Activated CD4-positive, alpha-beta T cell treated with anti-CD3 and anti-CD28 coated beads, Interleukin-2, amount 10 ng/mL, durations not matched to agents 24 days and 14 days (primary cell): ENCODE measurements at regions of chr1 and their contacts with region 1.

Region 1: DNA sequence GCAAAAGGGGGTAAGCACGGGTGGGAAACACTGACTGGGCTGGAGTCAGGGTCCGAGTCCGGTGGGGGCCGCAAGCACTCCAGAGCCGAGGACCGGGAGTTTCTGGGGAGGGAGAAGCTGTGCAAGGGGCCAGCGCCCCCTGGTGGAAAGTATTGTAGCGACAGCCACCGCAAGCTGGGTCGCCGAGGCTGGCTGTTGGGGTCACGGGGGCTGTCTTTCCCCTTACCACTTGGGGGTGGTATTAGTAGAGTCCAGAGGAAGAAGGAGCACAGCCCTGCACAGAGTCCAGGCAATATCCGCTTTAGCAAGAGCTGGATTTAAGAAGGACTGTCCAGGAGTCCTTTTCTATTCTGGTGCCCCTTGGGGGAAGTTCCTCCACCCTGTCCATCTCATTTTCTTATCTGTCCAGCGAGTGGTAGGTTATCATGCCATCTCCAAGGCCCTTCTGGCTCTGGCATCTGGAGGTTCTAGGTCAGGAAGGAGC is 17.9 kb upstream of the ETV3 start:
- DNase-seq: peak; percentile 93
- H3K4me3 Mint-ChIP-seq: peak overlapping the region; percentile 53
- H3K27ac Mint-ChIP-seq: peak overlapping the region; percentile 55
- H3K4me1 Mint-ChIP-seq: peaks cover 22% of the 10 kb centered on the region
- H3K27me3 Mint-ChIP-seq: peaks cover 31% of the 10 kb centered on the region

Region 2: DNA sequence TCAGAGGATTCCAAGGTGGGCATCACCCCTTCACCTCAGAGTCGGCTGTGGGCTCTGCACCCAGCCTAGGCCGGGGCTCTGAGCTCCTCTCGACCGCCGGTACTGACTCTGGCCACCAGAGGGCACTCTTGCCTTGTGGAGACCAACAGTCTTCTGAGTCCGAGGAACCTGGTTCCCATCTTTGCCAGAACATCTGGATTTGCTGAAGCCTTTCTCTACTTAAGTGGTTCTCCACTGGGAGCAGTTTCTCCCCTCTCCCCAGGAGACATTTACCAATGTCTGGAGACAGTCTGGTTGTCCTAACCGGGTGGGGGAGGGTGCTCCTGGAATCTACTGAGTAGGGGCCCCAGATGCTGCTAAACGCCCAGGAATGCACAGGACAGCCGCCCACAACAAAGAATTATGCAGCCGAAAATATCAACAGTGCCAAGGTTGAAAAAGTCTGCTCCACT is 65.9 kb before region 1 on chr1:
- intact Hi-C with region 1: loop called (anchors 1 kb)
- DNase-seq: peak; percentile 96
- H3K4me3 Mint-ChIP-seq: no peak overlapping the region
- H3K27ac Mint-ChIP-seq: no peak overlapping the region
- H3K4me1 Mint-ChIP-seq: peaks cover 2% of the 10 kb centered on the region
- H3K27me3 Mint-ChIP-seq: peaks cover 2% of the 10 kb centered on the region

Region 3: GRCh38 chr1:157138220-157139051 is 17.7 kb before region 1 on chr1 and contains the start of gene ETV3:
- intact Hi-C with region 1: loop called (anchors 2 kb)
- DNase-seq: peak; percentile 97
- H3K4me3 Mint-ChIP-seq: peak within 1 kb of the TSS; percentile 99
- H3K27ac Mint-ChIP-seq: peak within 1 kb of the TSS; percentile 90
- H3K4me1 Mint-ChIP-seq: peaks cover 62% of the 10 kb centered on the region
- H3K27me3 Mint-ChIP-seq: no peaks in the 10 kb centered on the region
- total RNA-seq, gene ETV3: 40.4 and 41.3 TPM in 2 replicates